ENCODE measurements at regions of chr13 and their contacts with region 1.

Region 1: DNA sequence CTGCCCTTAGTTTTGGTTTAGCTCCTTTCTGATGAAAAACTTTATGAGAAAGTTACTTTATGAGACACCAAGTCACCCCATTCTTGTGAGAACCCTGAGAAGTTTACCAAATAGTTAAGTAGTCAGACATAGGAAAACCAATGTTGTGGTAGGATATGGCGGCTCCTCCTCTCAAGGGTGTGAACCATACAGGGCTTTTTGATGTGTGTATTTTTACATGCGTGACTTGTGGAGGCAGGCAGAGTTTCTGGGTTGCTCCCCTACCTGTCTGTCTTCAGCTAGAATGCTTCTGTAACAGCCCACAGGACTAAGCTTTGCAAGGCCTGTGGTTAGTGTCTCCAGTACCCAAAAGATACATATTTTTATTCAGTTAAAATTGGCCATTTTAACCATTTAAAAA is 18.3 kb downstream of the UBAC2 start:
- DNase-seq: no peak
- ATAC-seq: peak in 1 of 2 donors; percentile 17
- H3K4me3 ChIP-seq: no peak overlapping the region
- H3K27ac ChIP-seq: peak overlapping the region; percentile 69 to 84 (median 78)
- H3K4me1 ChIP-seq: peaks cover 68 to 70% of the 10 kb centered on the region in 2 donors
- H3K27me3 ChIP-seq: no peaks in the 10 kb centered on the region
- CTCF ChIP-seq: no peak
- POLR2A ChIP-seq: no peak

Region 2: DNA sequence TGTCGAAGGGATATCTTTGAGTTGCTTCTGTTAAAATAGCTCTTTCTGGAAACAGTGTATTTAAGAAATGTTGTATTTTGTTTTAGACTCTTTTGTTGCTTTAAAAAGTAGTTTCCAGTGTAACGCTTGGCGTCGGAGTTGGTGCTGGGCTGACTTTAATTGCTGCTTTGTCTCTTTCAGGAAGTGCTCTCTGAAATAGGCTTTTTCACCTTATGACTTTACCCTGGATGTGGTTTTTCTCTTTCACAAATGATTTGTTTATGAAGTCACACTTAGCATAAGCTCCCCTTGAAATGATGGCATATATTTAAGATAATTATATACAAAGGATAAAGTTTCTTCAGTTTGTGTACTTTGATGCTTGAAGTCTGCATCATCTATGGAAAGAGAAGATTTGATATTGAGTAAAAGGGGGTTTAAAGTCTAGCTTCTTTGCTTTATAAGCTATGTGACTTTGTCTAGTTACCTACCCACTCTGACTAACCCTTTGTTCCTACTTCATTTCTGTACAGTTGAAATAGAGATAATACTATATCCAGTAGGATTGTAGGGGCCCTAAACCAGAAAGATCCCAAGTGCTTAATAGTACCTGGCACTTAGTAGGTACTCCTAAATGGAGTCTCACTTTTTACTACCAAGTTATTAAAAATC is 39.4 kb after region 1 on chr13 and contains the start of gene GPR18:
- in situ Hi-C with region 1: no loop called
- intact Hi-C with region 1: loop called (anchors 5 kb)
- DNase-seq: no peak
- ATAC-seq: no peak
- H3K4me3 ChIP-seq: no peak within 1 kb of the TSS
- H3K27ac ChIP-seq: peak within 1 kb of the TSS in 1 of 4 donors; percentile 42
- H3K4me1 ChIP-seq: peaks cover 28 to 46% of the 10 kb centered on the region in 2 donors
- H3K27me3 ChIP-seq: no peaks in the 10 kb centered on the region
- CTCF ChIP-seq: no peak
- POLR2A ChIP-seq: no peak
- total RNA-seq, gene GPR18: not detected

Region 3: GRCh38 chr13:99331881-99332293 is 112.9 kb after region 1 on chr13:
- in situ Hi-C with region 1: no loop called
- intact Hi-C with region 1: no loop called
- DNase-seq: no peak
- ATAC-seq: peak; percentile 53 to 67
- H3K4me3 ChIP-seq: no peak overlapping the region
- H3K27ac ChIP-seq: peak overlapping the region; percentile 8 to 29 (median 27)
- H3K4me1 ChIP-seq: peaks cover 10 to 23% of the 10 kb centered on the region in 2 donors
- H3K27me3 ChIP-seq: no peaks in the 10 kb centered on the region
- CTCF ChIP-seq: no peak
- POLR2A ChIP-seq: no peak